ENCODE measurements at regions of chr6 and their contacts with region 1.

Region 1: GRCh38 chr6:44456070-44456965 is 68.8 kb downstream of the CDC5L start:
- DNase-seq: peak; percentile 54
- ATAC-seq: peak; percentile 81
- H3K4me3 Mint-ChIP-seq: no peak overlapping the region
- H3K27ac Mint-ChIP-seq: no peak overlapping the region
- H3K4me1 Mint-ChIP-seq: peaks cover 3% of the 10 kb centered on the region
- H3K27me3 Mint-ChIP-seq: peaks cover 6% of the 10 kb centered on the region

Region 2: DNA sequence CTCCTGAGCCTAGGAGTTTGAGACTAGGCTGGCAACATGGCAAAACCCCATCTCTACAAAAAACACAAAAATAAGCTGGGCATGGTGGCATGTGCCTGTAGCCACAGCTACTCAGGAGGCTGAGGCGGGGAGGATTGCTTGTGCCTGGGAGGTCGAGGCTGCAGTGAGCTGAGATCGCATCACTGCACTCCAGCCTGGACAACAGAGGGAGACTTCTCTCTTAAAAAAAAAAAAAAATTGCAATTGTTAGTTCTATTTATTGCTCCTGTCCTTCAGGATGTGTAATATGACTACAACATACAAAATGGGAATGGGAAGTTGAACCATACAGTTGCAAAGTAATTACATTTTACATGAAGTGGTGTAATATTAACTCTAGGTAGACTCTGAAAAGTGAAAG is 135.1 kb before region 1 on chr6:
- CTCF ChIA-PET with region 1: no interaction called
- POLR2A ChIA-PET with region 1: no interaction called
- DNase-seq: no peak
- ATAC-seq: no peak
- H3K4me3 Mint-ChIP-seq: no peak overlapping the region
- H3K27ac Mint-ChIP-seq: no peak overlapping the region
- H3K4me1 Mint-ChIP-seq: no peaks in the 10 kb centered on the region
- H3K27me3 Mint-ChIP-seq: peaks cover 24% of the 10 kb centered on the region

Region 3: GRCh38 chr6:44387346-44388133 is 68.8 kb before region 1 on chr6 and contains the start of gene CDC5L:
- CTCF ChIA-PET with region 1: no interaction called
- POLR2A ChIA-PET with region 1: no interaction called
- DNase-seq: peak; percentile 98
- ATAC-seq: peak; percentile 94
- H3K4me3 Mint-ChIP-seq: peak within 1 kb of the TSS; percentile 97
- H3K27ac Mint-ChIP-seq: peak within 1 kb of the TSS; percentile 99
- H3K4me1 Mint-ChIP-seq: peaks cover 36% of the 10 kb centered on the region
- H3K27me3 Mint-ChIP-seq: peaks cover 8% of the 10 kb centered on the region
- total RNA-seq, gene CDC5L: 22.6 to 22.7 TPM

Region 4: DNA sequence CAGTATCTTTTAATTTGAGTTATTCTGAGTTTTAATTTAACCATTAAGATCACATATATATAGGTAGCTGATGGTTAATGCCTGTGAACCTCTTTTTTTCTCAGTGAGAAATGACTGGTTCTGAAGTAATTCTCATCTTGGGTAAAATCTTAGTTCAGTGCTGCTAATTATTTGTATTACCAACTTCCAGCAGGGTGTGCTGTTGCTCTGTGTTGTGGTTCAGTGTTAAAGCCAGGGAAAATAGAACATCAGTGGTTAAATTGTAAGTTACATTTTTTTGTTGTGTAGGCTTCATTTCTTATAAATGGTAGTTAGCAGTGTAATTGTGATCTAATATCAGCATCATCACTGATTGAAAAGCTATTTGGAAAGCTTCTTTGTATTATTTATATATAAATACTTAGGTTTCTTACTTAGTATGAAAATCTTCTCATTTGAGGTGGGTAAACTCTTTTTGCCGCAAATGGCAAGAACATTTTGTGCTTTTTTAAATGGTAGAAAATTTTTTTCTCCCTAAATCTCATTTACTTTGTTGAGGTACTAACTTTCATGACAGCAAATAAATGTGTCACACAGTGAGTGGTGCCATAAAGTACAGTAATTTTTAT is 25.1 kb before region 1 on chr6:
- CTCF ChIA-PET with region 1: interaction called, 21 read pairs
- POLR2A ChIA-PET with region 1: no interaction called
- DNase-seq: peak; percentile 64
- ATAC-seq: peak; percentile 73
- H3K4me3 Mint-ChIP-seq: no peak overlapping the region
- H3K27ac Mint-ChIP-seq: no peak overlapping the region
- H3K4me1 Mint-ChIP-seq: no peaks in the 10 kb centered on the region
- H3K27me3 Mint-ChIP-seq: no peaks in the 10 kb centered on the region

Region 5: DNA sequence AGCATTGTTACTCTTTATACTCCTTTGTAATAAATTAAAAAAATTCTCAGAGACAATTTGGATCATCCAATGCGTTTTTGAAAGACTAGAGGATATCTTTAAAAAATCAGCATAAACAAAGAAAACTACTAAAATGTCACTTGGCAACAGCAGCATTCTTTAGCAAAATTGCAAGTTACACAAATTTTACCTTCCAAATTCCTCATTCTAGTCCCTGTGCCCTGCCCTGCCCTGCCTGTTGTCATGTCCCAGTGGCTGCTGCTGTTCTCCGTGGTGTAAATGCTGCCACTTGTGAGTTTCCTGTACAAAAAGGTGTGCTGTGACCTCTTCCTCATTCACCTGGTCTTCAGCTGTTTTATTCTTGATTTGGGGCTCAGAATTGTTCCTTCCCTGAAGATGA is 14.4 kb after region 1 on chr6:
- CTCF ChIA-PET with region 1: interaction called, 52 read pairs
- POLR2A ChIA-PET with region 1: no interaction called
- DNase-seq: no peak
- ATAC-seq: no peak
- H3K4me3 Mint-ChIP-seq: no peak overlapping the region
- H3K27ac Mint-ChIP-seq: no peak overlapping the region
- H3K4me1 Mint-ChIP-seq: peaks cover 3% of the 10 kb centered on the region
- H3K27me3 Mint-ChIP-seq: peaks cover 7% of the 10 kb centered on the region